ENCODE measurements at regions of chr21 and their contacts with region 1.

Region 1: DNA sequence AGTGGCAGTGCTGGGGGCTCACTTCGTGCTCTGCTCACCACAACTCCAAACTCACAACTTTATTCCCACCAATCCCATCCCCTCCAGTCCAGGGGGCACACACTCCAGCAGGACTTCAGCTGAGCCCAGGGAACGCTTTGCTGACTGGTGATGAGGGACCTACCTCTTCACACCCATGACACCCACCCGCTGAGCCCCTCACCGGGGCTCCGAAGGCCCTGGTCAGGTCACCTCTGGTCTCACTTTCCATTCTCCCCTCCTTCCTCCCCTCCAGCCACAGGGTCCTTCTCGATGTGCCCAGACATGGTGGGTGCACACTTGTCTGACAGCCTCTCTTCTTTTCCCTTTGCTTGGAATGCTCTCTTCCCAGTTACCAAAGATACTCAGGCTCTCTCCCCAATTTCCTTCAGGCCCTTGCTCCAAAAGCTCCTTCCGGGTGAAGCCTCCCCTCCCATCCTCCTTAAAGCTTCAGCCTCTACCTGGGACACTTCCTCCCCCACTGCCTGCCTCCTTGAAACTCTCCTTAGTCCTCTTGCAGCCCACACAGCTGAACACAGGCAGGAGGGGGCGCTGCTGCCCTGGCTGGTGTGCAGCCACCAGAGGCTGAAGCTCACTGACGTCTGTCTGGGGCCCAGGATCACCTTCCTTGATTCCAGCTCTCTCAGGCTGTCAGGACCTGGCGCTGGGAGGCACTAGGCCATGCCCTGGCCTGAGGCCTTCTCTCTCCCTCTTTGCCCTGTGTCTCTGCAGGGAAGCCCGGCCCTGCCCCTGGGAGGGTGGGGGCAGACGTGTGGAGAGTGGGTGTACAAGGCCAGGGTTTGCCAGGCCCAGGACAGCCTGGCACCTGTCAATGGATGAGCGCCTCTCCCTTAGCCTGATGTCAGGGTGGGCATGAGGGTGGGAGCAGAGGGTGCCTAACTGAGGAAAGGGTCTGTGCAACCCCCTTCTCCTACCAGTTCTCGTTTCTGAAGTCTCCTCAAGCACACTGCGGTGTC is 1.6 kb downstream of the KCNE1 start:
- DNase-seq: no peak
- H3K4me3 Mint-ChIP-seq: no peak overlapping the region
- H3K27ac Mint-ChIP-seq: no peak overlapping the region
- H3K4me1 Mint-ChIP-seq: peaks cover 7% of the 10 kb centered on the region
- H3K27me3 Mint-ChIP-seq: peaks cover 3% of the 10 kb centered on the region

Region 2: DNA sequence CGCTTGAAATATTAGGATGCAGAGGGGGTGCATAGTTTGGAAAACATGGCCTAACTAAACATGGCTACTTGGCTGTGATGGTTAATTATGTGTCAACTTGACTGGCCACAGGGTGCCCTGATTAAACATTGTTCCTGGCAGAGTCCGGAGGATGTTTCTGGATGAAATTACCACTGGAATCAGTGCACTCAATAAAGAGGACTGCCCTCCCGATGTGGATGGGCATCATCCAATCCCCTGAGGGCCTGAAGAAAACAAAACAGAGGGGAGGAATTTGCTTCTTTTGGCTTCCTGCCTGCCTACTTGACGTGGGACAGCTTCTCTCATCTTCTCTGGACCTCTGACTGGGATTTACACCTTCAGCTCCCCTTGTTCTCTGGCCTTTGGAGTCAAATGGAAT is 225.8 kb before region 1 on chr21:
- intact Hi-C with region 1: no loop called
- DNase-seq: no peak
- H3K4me3 Mint-ChIP-seq: no peak overlapping the region
- H3K27ac Mint-ChIP-seq: no peak overlapping the region
- H3K4me1 Mint-ChIP-seq: no peaks in the 10 kb centered on the region
- H3K27me3 Mint-ChIP-seq: no peaks in the 10 kb centered on the region

Region 3: DNA sequence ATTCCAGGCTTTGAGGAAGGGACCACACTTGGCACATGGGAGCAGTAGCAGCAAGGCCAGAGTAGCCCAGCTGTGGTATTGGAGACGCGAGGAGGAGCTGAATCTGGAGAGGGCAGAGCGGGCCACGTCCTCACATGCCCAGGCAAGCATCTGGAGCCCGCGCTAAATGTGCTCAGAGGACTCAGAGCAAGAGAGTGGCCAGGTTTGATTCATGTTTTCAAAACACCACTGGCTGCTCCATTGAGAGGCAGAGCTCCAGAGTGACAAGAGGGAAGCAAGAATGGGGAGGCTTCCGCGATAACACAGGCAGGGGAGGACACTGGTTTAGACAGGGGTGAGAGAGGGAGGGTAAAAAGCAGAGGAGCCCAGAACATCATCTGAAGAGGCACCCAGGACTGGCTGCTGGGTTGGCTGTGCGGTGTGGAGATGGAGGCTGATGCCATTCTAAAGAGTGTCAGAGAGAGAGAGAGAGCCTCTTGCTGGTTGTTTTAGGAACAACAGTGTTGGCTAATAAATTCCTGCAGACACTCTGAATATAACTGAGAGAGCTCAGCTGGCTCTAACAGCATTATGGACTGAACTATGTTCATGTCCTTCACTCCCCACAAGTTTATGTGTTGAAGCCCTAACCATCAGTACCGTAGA is 72.2 kb after region 1 on chr21:
- intact Hi-C with region 1: loop called (anchors 2 kb)
- DNase-seq: no peak
- H3K4me3 Mint-ChIP-seq: no peak overlapping the region
- H3K27ac Mint-ChIP-seq: no peak overlapping the region
- H3K4me1 Mint-ChIP-seq: peaks cover 28% of the 10 kb centered on the region
- H3K27me3 Mint-ChIP-seq: no peaks in the 10 kb centered on the region

Region 4: GRCh38 chr21:34603002-34603709 is 92.7 kb after region 1 on chr21:
- intact Hi-C with region 1: loop called (anchors 1 kb)
- DNase-seq: peak; percentile 44
- H3K4me3 Mint-ChIP-seq: no peak overlapping the region
- H3K27ac Mint-ChIP-seq: no peak overlapping the region
- H3K4me1 Mint-ChIP-seq: no peaks in the 10 kb centered on the region
- H3K27me3 Mint-ChIP-seq: peaks cover 7% of the 10 kb centered on the region

Region 5: GRCh38 chr21:34630536-34631143 is 120.2 kb after region 1 on chr21:
- intact Hi-C with region 1: loop called (anchors 1 kb)
- DNase-seq: no peak
- H3K4me3 Mint-ChIP-seq: no peak overlapping the region
- H3K27ac Mint-ChIP-seq: no peak overlapping the region
- H3K4me1 Mint-ChIP-seq: no peaks in the 10 kb centered on the region
- H3K27me3 Mint-ChIP-seq: peaks cover 17% of the 10 kb centered on the region